ENCODE measurements at regions of chr1 and their contacts with region 1.

Region 1: DNA sequence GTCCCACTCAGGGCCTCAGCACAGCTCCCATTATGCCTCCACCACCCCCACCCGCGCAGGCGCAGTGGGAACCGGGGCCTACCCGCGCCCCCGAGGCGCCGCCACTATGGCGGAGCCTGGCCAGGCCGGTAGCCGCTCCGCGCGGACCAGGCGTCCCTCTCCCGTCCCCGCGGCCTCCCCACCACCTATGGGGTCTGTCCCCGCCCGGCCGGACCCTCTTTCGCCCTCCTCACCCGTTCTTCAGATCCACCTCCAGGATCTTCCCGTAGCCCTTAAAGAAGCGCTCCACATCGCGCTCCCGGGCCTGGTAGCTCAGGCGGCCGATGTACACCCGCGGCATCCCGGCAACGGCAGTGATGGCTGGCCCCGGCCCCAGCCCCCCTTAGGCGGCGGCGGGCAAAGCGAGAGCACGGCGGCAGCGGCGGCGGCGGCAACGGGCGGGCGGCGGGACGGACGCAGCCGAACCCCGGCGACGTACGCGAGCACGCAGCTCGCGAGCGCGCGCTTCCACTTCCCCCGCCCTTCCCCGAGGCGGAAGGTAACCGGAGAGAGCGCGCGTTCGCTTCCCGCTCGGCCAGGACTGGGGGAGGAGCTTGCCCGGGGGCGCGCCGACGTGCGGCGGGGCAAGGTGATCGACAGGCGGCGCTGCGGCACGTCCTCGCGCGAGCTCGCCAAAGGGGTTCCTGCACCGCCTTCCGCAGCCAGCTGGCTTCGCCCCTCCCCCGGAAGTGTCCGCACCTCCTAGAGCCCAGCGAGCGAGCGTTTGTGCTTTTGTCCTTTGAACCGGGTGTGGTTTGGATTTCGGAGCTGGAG is at the start of gene SRSF4:
- DNase-seq: peak; percentile 98 to 99 (median 99)
- ATAC-seq: peak; percentile 92
- H3K4me3 ChIP-seq: peak within 1 kb of the TSS; percentile 89 to 98
- H3K4me3 Mint-ChIP-seq: peak within 1 kb of the TSS; percentile 94
- H3K27ac ChIP-seq: peak within 1 kb of the TSS; percentile 94 to 100
- H3K27ac Mint-ChIP-seq: peak within 1 kb of the TSS; percentile 94
- H3K4me1 ChIP-seq: peaks cover 37% of the 10 kb centered on the region
- H3K4me1 Mint-ChIP-seq: peaks cover 48% of the 10 kb centered on the region
- H3K27me3 ChIP-seq: no peaks in the 10 kb centered on the region
- H3K27me3 Mint-ChIP-seq: no peaks in the 10 kb centered on the region
- CTCF ChIP-seq: peak; percentile 68
- total RNA-seq, gene SRSF4: 83.6 to 92.2 TPM

Region 2: GRCh38 chr1:28329395-28330153 is 852.0 kb before region 1 on chr1:
- CTCF ChIA-PET with region 1: no interaction called
- POLR2A ChIA-PET with region 1: no interaction called
- intact Hi-C with region 1: loop called in 1 of 2 experiments (anchors 2 kb)
- DNase-seq: peak in 6 of 9 experiments; percentile 18 to 72 (median 46)
- ATAC-seq: peak; percentile 20
- H3K4me3 ChIP-seq: peak overlapping the region; percentile 53 to 57
- H3K4me3 Mint-ChIP-seq: peak overlapping the region; percentile 95
- H3K27ac ChIP-seq: peak overlapping the region; percentile 84 to 86
- H3K27ac Mint-ChIP-seq: peak overlapping the region; percentile 98
- H3K4me1 ChIP-seq: peaks cover 20% of the 10 kb centered on the region
- H3K4me1 Mint-ChIP-seq: peaks cover 34% of the 10 kb centered on the region
- H3K27me3 ChIP-seq: no peaks in the 10 kb centered on the region
- H3K27me3 Mint-ChIP-seq: no peaks in the 10 kb centered on the region
- CTCF ChIP-seq: no peak

Region 3: GRCh38 chr1:28642847-28643635 is 538.6 kb before region 1 on chr1 and contains the start of gene TAF12:
- CTCF ChIA-PET with region 1: no interaction called
- POLR2A ChIA-PET with region 1: interaction called, 13 read pairs
- intact Hi-C with region 1: loop called (anchors 1 to 2 kb)
- DNase-seq: peak; percentile 87 to 98 (median 91)
- ATAC-seq: peak; percentile 79
- H3K4me3 ChIP-seq: peak within 1 kb of the TSS; percentile 62 to 92
- H3K4me3 Mint-ChIP-seq: peak within 1 kb of the TSS; percentile 100
- H3K27ac ChIP-seq: peak within 1 kb of the TSS; percentile 88 to 90
- H3K27ac Mint-ChIP-seq: peak within 1 kb of the TSS; percentile 99
- H3K4me1 ChIP-seq: peaks cover 34% of the 10 kb centered on the region
- H3K4me1 Mint-ChIP-seq: peaks cover 54% of the 10 kb centered on the region
- H3K27me3 ChIP-seq: no peaks in the 10 kb centered on the region
- H3K27me3 Mint-ChIP-seq: no peaks in the 10 kb centered on the region
- CTCF ChIP-seq: peak; percentile 32
- total RNA-seq, gene TAF12: 7.7 to 8.5 TPM

Region 4: GRCh38 chr1:28886731-28887418 is 294.7 kb before region 1 on chr1:
- CTCF ChIA-PET with region 1: interaction called, 3 read pairs
- POLR2A ChIA-PET with region 1: interaction called, 12 read pairs
- intact Hi-C with region 1: loop called (anchors 1 to 5 kb)
- DNase-seq: peak; percentile 80 to 94 (median 87)
- ATAC-seq: peak; percentile 71
- H3K4me3 ChIP-seq: peak overlapping the region; percentile 93 to 94
- H3K4me3 Mint-ChIP-seq: peak overlapping the region; percentile 87
- H3K27ac ChIP-seq: peak overlapping the region; percentile 67 to 88
- H3K27ac Mint-ChIP-seq: peak overlapping the region; percentile 96
- H3K4me1 ChIP-seq: peaks cover 41% of the 10 kb centered on the region
- H3K4me1 Mint-ChIP-seq: peaks cover 59% of the 10 kb centered on the region
- H3K27me3 ChIP-seq: no peaks in the 10 kb centered on the region
- H3K27me3 Mint-ChIP-seq: no peaks in the 10 kb centered on the region
- CTCF ChIP-seq: no peak

Region 5: GRCh38 chr1:29152046-29152805 is 29.4 kb before region 1 on chr1:
- CTCF ChIA-PET with region 1: no interaction called
- POLR2A ChIA-PET with region 1: no interaction called
- intact Hi-C with region 1: no loop called
- DNase-seq: no peak
- ATAC-seq: no peak
- H3K4me3 ChIP-seq: no peak overlapping the region
- H3K4me3 Mint-ChIP-seq: no peak overlapping the region
- H3K27ac ChIP-seq: no peak overlapping the region
- H3K27ac Mint-ChIP-seq: no peak overlapping the region
- H3K4me1 ChIP-seq: no peaks in the 10 kb centered on the region
- H3K4me1 Mint-ChIP-seq: no peaks in the 10 kb centered on the region
- H3K27me3 ChIP-seq: no peaks in the 10 kb centered on the region
- H3K27me3 Mint-ChIP-seq: no peaks in the 10 kb centered on the region
- CTCF ChIP-seq: no peak

Region 6: DNA sequence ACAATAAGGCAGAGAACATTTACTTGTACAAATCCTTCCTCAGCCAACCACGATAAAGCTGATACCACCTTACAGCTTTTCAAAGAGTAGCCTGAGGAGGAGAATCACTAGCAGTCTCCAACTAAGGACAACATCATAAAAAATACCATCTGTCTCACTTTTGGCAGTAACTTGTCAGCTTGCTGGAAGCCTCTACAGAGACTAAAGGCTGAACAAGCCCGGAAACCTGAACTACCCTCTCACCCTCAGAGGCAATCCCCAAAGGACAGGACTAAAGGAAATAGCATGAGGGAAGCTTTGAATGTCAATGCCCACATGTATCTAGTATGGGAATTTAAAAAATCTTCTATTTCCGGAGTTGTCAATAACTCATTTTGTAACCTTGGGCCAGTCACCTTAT is 10.5 kb before region 1 on chr1:
- CTCF ChIA-PET with region 1: interaction called, 4 read pairs
- POLR2A ChIA-PET with region 1: interaction called, 15 read pairs
- intact Hi-C with region 1: no loop called
- DNase-seq: no peak
- ATAC-seq: no peak
- H3K4me3 ChIP-seq: no peak overlapping the region
- H3K4me3 Mint-ChIP-seq: peak overlapping the region; percentile 52
- H3K27ac ChIP-seq: no peak overlapping the region
- H3K27ac Mint-ChIP-seq: no peak overlapping the region
- H3K4me1 ChIP-seq: peaks cover 43% of the 10 kb centered on the region
- H3K4me1 Mint-ChIP-seq: peaks cover 67% of the 10 kb centered on the region
- H3K27me3 ChIP-seq: no peaks in the 10 kb centered on the region
- H3K27me3 Mint-ChIP-seq: no peaks in the 10 kb centered on the region
- CTCF ChIP-seq: no peak

Region 7: GRCh38 chr1:29230553-29231378 is 49.1 kb after region 1 on chr1 and contains the start of gene MECR:
- CTCF ChIA-PET with region 1: interaction called, 3 read pairs
- POLR2A ChIA-PET with region 1: interaction called, 10 read pairs
- intact Hi-C with region 1: loop called (anchors 2 kb)
- DNase-seq: peak; percentile 88 to 97 (median 94)
- ATAC-seq: peak; percentile 97
- H3K4me3 ChIP-seq: peak within 1 kb of the TSS; percentile 76 to 91
- H3K4me3 Mint-ChIP-seq: peak within 1 kb of the TSS; percentile 91
- H3K27ac ChIP-seq: peak within 1 kb of the TSS; percentile 62 to 65
- H3K27ac Mint-ChIP-seq: peak within 1 kb of the TSS; percentile 94
- H3K4me1 ChIP-seq: peaks cover 9% of the 10 kb centered on the region
- H3K4me1 Mint-ChIP-seq: peaks cover 28% of the 10 kb centered on the region
- H3K27me3 ChIP-seq: no peaks in the 10 kb centered on the region
- H3K27me3 Mint-ChIP-seq: peaks cover 8% of the 10 kb centered on the region
- CTCF ChIP-seq: no peak
- total RNA-seq, gene MECR: 5.5 to 8.0 TPM